ENCODE measurements at regions of chr7 and their contacts with region 1.

Region 1: GRCh38 chr7:98988641-98989040 is 110.3 kb downstream of the TRRAP start:
- DNase-seq: no peak
- H3K4me3 ChIP-seq: no peak overlapping the region
- H3K27ac ChIP-seq: no peak overlapping the region
- H3K4me1 ChIP-seq: no peaks in the 10 kb centered on the region
- H3K27me3 ChIP-seq: no peaks in the 10 kb centered on the region
- CTCF ChIP-seq: no peak

Region 2: GRCh38 chr7:98892609-98893008 is 96.0 kb before region 1 on chr7:
- CTCF ChIA-PET with region 1: no interaction called
- dilution Hi-C with region 1: loop called (anchors 5 kb)
- in situ Hi-C with region 1: no loop called
- intact Hi-C with region 1: no loop called
- DNase-seq: no peak
- H3K4me3 ChIP-seq: no peak overlapping the region
- H3K27ac ChIP-seq: no peak overlapping the region
- H3K4me1 ChIP-seq: no peaks in the 10 kb centered on the region
- H3K27me3 ChIP-seq: no peaks in the 10 kb centered on the region
- CTCF ChIP-seq: no peak

Region 3: GRCh38 chr7:98935811-98936210 is 52.8 kb before region 1 on chr7:
- CTCF ChIA-PET with region 1: no interaction called
- dilution Hi-C with region 1: loop called (anchors 5 kb)
- in situ Hi-C with region 1: no loop called
- intact Hi-C with region 1: no loop called
- DNase-seq: no peak
- H3K4me3 ChIP-seq: no peak overlapping the region
- H3K27ac ChIP-seq: no peak overlapping the region
- H3K4me1 ChIP-seq: no peaks in the 10 kb centered on the region
- H3K27me3 ChIP-seq: no peaks in the 10 kb centered on the region
- CTCF ChIP-seq: no peak

Region 4: DNA sequence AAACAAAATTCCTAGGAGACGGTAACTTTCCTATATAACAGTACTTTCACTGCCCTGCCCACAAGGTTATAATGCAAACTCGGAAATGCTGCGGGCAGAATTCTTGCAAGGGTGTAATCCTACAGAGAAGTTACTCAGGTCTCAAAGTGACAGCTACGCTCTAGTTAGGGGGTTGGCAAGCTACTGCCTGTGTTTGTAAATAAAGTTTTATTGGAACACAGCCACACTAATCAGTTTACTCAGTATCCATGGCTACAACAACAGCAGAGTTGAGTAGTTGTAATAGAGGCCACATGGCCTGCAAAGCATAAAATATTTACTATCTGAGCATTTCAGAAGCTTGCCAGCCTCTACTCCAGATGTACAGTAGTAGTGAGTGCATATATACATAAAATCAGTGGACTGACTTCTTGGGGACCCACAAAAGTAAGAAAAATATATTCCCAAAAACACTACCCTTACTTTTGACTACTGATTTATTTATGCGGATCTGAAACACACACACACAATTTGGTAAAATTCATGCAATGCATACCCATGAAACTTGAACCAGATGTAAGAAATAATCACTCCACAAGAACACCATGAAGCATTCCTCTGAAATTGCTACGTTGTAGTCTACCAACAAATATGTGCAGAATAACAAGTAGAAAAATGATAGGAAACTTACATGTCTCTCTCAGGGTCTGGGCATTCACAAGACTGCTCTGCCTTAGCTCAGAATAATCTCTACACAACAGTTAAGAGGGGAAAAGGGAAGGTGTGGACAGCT is 102.3 kb after region 1 on chr7:
- CTCF ChIA-PET with region 1: no interaction called
- dilution Hi-C with region 1: no loop called
- in situ Hi-C with region 1: no loop called
- intact Hi-C with region 1: no loop called
- DNase-seq: no peak
- H3K4me3 ChIP-seq: no peak overlapping the region
- H3K27ac ChIP-seq: no peak overlapping the region
- H3K4me1 ChIP-seq: peaks cover 4% of the 10 kb centered on the region
- H3K27me3 ChIP-seq: no peaks in the 10 kb centered on the region
- CTCF ChIP-seq: no peak

Region 5: GRCh38 chr7:99597762-99598501 is 609.3 kb after region 1 on chr7 and contains the start of gene TMEM225B:
- CTCF ChIA-PET with region 1: no interaction called
- dilution Hi-C with region 1: no loop called
- in situ Hi-C with region 1: no loop called
- intact Hi-C with region 1: no loop called
- DNase-seq: no peak
- H3K4me3 ChIP-seq: no peak within 1 kb of the TSS
- H3K27ac ChIP-seq: no peak within 1 kb of the TSS
- H3K4me1 ChIP-seq: no peaks in the 10 kb centered on the region
- H3K27me3 ChIP-seq: no peaks in the 10 kb centered on the region
- CTCF ChIP-seq: no peak
- total RNA-seq, gene TMEM225B: not detected